ENCODE measurements at regions of chr9 and their contacts with region 1.

Region 1: GRCh38 chr9:113309204-113309813 is 6.1 kb upstream of the RNF183 start:
- DNase-seq: peak in 5 of 9 donors; percentile 19 to 45 (median 33)
- ATAC-seq: peak; percentile 57
- H3K4me3 ChIP-seq: no peak overlapping the region
- H3K4me3 Mint-ChIP-seq: no peak overlapping the region
- H3K27ac ChIP-seq: no peak overlapping the region
- H3K27ac Mint-ChIP-seq: no peak overlapping the region
- H3K4me1 ChIP-seq: no peaks in the 10 kb centered on the region
- H3K4me1 Mint-ChIP-seq: no peaks in the 10 kb centered on the region
- H3K27me3 ChIP-seq: no peaks in the 10 kb centered on the region
- H3K27me3 Mint-ChIP-seq: peaks cover 0 to 7% (median 0%) of the 10 kb centered on the region in 5 donors

Region 2: GRCh38 chr9:113349445-113350094 is 40.3 kb after region 1 on chr9 and contains the start of gene BSPRY:
- CTCF ChIA-PET with region 1: interaction called, 4 read pairs
- POLR2A ChIA-PET with region 1: no interaction called
- intact Hi-C with region 1: loop called in 1 of 2 experiments (anchors 2 kb)
- DNase-seq: peak in 7 of 9 donors; percentile 27 to 67 (median 44)
- ATAC-seq: peak; percentile 70
- H3K4me3 ChIP-seq: peak within 1 kb of the TSS; percentile 54
- H3K4me3 Mint-ChIP-seq: peak within 1 kb of the TSS; percentile 73 to 93 (median 81)
- H3K27ac ChIP-seq: no peak within 1 kb of the TSS
- H3K27ac Mint-ChIP-seq: peak within 1 kb of the TSS in 3 of 9 donors; percentile 5 to 87 (median 57)
- H3K4me1 ChIP-seq: peaks cover 13 to 15% of the 10 kb centered on the region in 2 donors
- H3K4me1 Mint-ChIP-seq: peaks cover 10 to 49% (median 21%) of the 10 kb centered on the region in 7 donors
- H3K27me3 ChIP-seq: peaks cover 3 to 5% of the 10 kb centered on the region in 2 donors
- H3K27me3 Mint-ChIP-seq: peaks cover 0 to 40% (median 29%) of the 10 kb centered on the region in 5 donors
- total RNA-seq, gene BSPRY: 0.13 to 9.6 (median 1.2) TPM in 3 of 5 experiments, not detected in the others